CD14-positive monocyte (primary cell): ENCODE measurements at regions of chr1 and their contacts with region 1.

Region 1: GRCh38 chr1:8142955-8143629 is 117.0 kb upstream of the ERRFI1 start:
- DNase-seq: no peak
- H3K4me3 ChIP-seq: no peak overlapping the region
- H3K4me3 Mint-ChIP-seq: no peak overlapping the region
- H3K27ac ChIP-seq: no peak overlapping the region
- H3K27ac Mint-ChIP-seq: no peak overlapping the region
- H3K4me1 ChIP-seq: no peaks in the 10 kb centered on the region
- H3K4me1 Mint-ChIP-seq: peaks cover 7% of the 10 kb centered on the region
- H3K27me3 ChIP-seq: peaks cover 0 to 6% of the 10 kb centered on the region in 2 donors
- H3K27me3 Mint-ChIP-seq: peaks cover 15 to 21% (median 16%) of the 10 kb centered on the region in 3 donors
- CTCF ChIP-seq: no peak

Region 2: GRCh38 chr1:8097077-8097799 is 45.9 kb before region 1 on chr1:
- intact Hi-C with region 1: loop called in 1 of 2 experiments (anchors 5 kb)
- DNase-seq: peak; percentile 75 to 86 (median 84)
- H3K4me3 ChIP-seq: peak overlapping the region in 1 of 3 experiments; percentile 26
- H3K4me3 Mint-ChIP-seq: peak overlapping the region in 1 of 2 donors; percentile 19
- H3K27ac ChIP-seq: peak overlapping the region in 1 of 2 donors; percentile 90
- H3K27ac Mint-ChIP-seq: peak overlapping the region; percentile 87 to 97 (median 93)
- H3K4me1 ChIP-seq: peaks cover 19 to 27% of the 10 kb centered on the region in 2 donors
- H3K4me1 Mint-ChIP-seq: peaks cover 42% of the 10 kb centered on the region
- H3K27me3 ChIP-seq: no peaks in the 10 kb centered on the region
- H3K27me3 Mint-ChIP-seq: peaks cover 0 to 15% (median 3%) of the 10 kb centered on the region in 3 donors
- CTCF ChIP-seq: no peak